ENCODE measurements at regions of chr11 and their contacts with region 1.

Region 1: DNA sequence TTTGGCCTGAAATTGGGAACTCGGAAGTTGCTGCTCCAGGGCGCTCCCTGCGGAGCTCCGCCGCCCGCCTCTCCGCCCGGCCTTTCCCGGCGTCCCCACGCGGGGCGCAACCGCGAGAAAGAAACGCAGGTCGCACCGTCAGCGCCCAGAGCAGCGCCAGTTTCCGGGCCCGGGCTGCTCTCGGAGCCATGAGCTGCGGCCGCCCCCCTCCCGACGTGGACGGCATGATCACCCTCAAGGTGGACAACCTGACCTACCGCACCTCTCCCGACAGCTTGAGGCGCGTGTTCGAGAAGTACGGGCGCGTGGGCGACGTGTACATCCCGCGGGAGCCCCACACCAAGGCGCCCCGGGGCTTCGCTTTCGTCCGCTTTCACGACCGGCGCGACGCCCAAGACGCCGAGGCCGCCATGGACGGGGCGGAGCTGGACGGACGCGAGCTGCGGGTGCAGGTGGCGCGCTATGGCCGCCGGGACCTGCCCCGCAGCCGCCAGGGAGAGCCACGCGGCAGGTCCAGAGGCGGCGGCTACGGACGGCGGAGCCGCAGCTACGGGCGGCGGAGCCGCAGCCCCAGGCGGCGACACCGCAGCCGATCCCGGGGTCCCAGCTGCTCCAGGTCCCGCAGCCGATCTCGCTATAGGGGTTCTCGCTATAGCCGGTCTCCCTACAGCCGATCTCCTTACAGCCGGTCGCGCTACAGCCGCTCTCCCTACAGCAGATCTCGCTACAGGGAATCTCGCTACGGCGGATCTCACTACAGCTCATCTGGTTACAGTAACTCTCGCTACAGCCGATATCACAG is 521 bp downstream of the SRSF8 start:
- DNase-seq: peak in 1 of 2 experiments; percentile 83
- H3K4me3 ChIP-seq: peak overlapping the region; percentile 70 to 85 (median 72)
- H3K27ac ChIP-seq: peak overlapping the region; percentile 62; the same call in 1 of the 2 replicates
- H3K4me1 ChIP-seq: peaks cover 0 to 2% (median 0%) of the 10 kb centered on the region in 4 experiments; a peak in 2 of 7 replicates
- H3K27me3 ChIP-seq: no peaks in the 10 kb centered on the region
- CTCF ChIP-seq: peak; percentile 38 to 76 (median 39)
- EP300 ChIP-seq: no peak
- POLR2A ChIP-seq: peak; percentile 62 to 78
- RAD21 ChIP-seq: 0 out of 4 replicates have a peak, but pooled peaks have one; percentile 4 to 13

Region 2: GRCh38 chr11:95055283-95055897 is 11.8 kb before region 1 on chr11:
- CTCF ChIA-PET with region 1: interaction called, 25 read pairs
- POLR2A ChIA-PET with region 1: interaction called, 28 read pairs
- DNase-seq: no peak
- H3K4me3 ChIP-seq: no peak overlapping the region
- H3K27ac ChIP-seq: no peak overlapping the region
- H3K4me1 ChIP-seq: no peaks in the 10 kb centered on the region
- H3K27me3 ChIP-seq: no peaks in the 10 kb centered on the region; a peak in 2 of 7 replicates
- CTCF ChIP-seq: no peak
- EP300 ChIP-seq: no peak
- POLR2A ChIP-seq: no peak
- RAD21 ChIP-seq: no peak

Region 3: DNA sequence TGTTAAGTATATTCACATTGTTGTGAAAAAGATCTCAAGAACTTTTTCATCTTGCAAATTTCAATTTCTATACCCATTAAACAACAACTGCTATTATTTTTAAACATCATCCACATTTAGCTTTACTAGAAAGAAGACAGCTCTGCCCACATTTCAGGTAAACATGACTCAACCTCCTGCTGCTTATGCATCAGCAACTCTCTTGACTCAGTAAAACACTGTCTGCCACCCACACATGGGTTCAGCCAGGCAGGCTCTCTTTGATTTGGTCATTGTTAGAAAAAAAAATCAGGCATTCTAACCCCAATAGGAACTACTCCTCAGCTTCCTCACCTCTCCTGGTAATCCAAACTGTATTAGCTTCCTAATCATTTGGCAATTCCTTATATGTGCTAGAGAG is 17.3 kb after region 1 on chr11:
- CTCF ChIA-PET with region 1: interaction called, 84 read pairs
- POLR2A ChIA-PET with region 1: interaction called, 44 read pairs
- DNase-seq: no peak
- H3K4me3 ChIP-seq: no peak overlapping the region
- H3K27ac ChIP-seq: no peak overlapping the region
- H3K4me1 ChIP-seq: peaks cover 0 to 3% (median 1%) of the 10 kb centered on the region in 4 experiments; a peak in 3 of 7 replicates
- H3K27me3 ChIP-seq: peaks cover 0 to 10% (median 8%) of the 10 kb centered on the region in 4 experiments; a peak in 4 of 7 replicates
- CTCF ChIP-seq: no peak
- EP300 ChIP-seq: no peak
- POLR2A ChIP-seq: no peak
- RAD21 ChIP-seq: no peak

Region 4: DNA sequence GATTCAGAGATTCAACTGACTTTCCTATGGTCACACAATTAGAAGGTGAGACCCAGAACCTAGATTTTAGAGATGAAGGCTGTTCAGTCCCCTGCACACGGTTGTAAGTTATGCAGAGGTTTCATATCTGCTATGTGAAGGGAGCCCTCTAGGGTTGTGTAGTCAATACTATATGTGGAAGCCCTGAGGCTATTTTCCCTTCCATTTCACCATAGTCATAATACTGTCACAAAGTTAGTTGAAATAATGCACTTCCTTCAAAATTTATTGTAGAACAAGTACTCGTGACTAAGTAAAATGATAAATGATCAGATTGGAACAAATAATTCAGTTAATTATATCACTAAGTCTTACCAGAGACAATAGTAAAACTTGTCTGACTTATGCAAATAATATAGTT is 71.2 kb after region 1 on chr11:
- CTCF ChIA-PET with region 1: interaction called, 15 read pairs
- POLR2A ChIA-PET with region 1: interaction called, 4 read pairs
- DNase-seq: no peak
- H3K4me3 ChIP-seq: no peak overlapping the region
- H3K27ac ChIP-seq: no peak overlapping the region
- H3K4me1 ChIP-seq: no peaks in the 10 kb centered on the region
- H3K27me3 ChIP-seq: peaks cover 0 to 5% (median 1%) of the 10 kb centered on the region in 4 experiments; a peak in 2 of 7 replicates
- CTCF ChIP-seq: peak in 1 of 3 experiments; percentile 6; a peak in 1 of 4 replicates
- EP300 ChIP-seq: no peak
- POLR2A ChIP-seq: no peak
- RAD21 ChIP-seq: peak; percentile 16 to 45; a peak in 3 of 4 replicates